ENCODE measurements at regions of chr20 and their contacts with region 1.

Region 1: DNA sequence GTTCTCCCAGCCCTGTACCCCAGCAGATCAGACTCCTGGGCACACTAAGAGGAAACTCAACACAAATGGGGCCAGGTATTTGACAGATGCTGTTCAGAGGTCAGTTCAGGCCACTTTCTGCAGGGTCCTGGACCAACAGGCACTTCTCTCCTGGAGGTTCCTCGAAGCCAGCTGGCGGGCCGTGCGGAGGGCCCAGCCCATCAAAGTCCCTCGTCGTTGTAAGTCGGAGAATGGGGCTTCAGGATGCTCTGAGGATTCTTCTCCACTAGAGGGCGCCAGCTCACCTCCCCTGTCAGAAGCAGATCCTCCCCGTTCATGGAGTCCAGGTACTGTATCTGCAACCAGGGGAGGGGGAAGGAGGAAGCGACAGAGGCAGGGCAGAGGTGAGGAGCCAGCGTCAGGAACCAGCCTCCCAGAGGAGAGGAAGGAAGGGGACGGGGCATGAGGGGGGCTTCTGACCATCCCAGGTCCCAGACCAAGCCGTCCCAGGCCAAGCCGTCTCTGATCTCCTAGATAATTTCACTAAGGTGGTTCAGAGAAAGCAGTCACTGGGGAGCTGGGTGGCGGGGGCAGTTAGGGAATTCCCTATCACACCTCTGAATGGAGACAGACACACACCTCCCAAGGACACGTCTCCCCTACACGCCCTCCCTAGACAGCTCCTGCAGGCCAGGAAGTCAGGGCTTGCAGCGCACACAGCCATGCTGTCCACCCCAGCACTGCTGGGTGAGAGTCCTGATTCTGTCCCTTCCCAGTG is 11.7 kb upstream of the FAM83C start:
- DNase-seq: peak; percentile 89
- H3K4me3 ChIP-seq: no peak overlapping the region
- H3K27ac ChIP-seq: peak overlapping the region; percentile 95
- H3K4me1 ChIP-seq: peaks cover 74% of the 10 kb centered on the region
- H3K27me3 ChIP-seq: no peaks in the 10 kb centered on the region
- CTCF ChIP-seq: peak; percentile 88 to 97

Region 2: DNA sequence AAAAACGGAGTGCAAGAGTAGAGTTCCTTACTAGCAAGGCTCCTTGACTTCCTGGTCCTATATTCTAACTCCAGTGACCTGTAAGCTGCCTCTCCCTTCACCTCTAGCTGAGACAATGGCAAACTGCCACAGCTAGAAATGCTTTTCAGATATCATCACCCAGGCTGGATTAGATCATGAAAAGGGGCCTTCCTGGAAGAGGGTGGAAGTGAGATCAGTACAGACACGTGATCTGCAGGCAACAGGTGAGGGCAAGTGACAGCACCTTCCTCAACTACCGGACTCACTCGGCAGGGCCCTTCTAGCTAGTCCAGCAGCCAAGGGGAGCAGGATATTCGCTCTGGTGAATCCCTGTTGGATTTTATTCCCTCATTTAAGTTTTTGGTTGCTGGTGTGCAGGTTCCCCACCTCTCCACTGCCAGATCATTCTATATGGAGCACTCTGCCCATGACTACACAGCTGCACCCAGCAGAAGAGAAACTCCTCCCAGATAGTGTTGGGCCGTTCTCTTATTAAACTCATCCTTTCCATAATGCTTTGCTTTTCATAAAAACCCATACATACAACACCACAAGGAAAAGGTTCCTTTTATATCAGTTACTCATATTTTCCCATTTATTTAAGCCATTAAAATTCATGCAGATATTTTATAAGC is 14.7 kb after region 1 on chr20:
- CTCF ChIA-PET with region 1: no interaction called
- dilution Hi-C with region 1: no loop called
- in situ Hi-C with region 1: no loop called
- intact Hi-C with region 1: loop called (anchors 1 kb)
- DNase-seq: peak; percentile 98
- H3K4me3 ChIP-seq: no peak overlapping the region
- H3K27ac ChIP-seq: peak overlapping the region; percentile 73
- H3K4me1 ChIP-seq: peaks cover 46% of the 10 kb centered on the region
- H3K27me3 ChIP-seq: no peaks in the 10 kb centered on the region
- CTCF ChIP-seq: no peak

Region 3: DNA sequence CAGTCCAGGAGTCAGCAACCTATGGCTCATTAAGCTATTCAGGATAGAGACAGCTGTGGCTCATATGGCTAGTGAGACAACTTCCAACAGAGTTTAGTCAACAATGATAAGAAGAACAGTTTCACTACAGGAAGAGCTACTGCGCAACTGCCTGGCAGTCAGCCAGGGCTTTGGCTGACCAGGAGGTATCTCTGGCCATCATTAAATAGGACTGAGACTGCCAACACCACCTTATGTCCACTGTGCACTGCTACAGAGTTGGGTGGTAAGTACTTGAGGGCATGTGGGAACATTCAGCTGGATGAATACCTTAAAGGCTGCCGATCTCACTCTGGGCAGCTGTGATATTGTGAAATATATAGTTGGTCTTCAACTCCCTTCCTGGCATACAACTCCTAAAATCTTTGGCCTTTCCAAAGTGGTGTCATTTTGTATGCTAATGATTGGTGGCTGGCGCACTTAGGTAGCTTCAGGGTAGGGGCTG is 40.5 kb after region 1 on chr20:
- CTCF ChIA-PET with region 1: interaction called, 4 read pairs
- dilution Hi-C with region 1: loop called (anchors 5 kb)
- in situ Hi-C with region 1: no loop called
- intact Hi-C with region 1: no loop called
- DNase-seq: peak; percentile 69
- H3K4me3 ChIP-seq: no peak overlapping the region
- H3K27ac ChIP-seq: no peak overlapping the region
- H3K4me1 ChIP-seq: peaks cover 35% of the 10 kb centered on the region
- H3K27me3 ChIP-seq: no peaks in the 10 kb centered on the region
- CTCF ChIP-seq: no peak

Region 4: GRCh38 chr20:35447082-35447789 is 143.3 kb after region 1 on chr20:
- CTCF ChIA-PET with region 1: interaction called, 7 read pairs
- dilution Hi-C with region 1: loop called (anchors 5 kb)
- in situ Hi-C with region 1: loop called (anchors 5 to 10 kb)
- intact Hi-C with region 1: loop called (anchors 1 kb)
- DNase-seq: peak; percentile 71
- H3K4me3 ChIP-seq: no peak overlapping the region
- H3K27ac ChIP-seq: no peak overlapping the region
- H3K4me1 ChIP-seq: peaks cover 26% of the 10 kb centered on the region
- H3K27me3 ChIP-seq: no peaks in the 10 kb centered on the region
- CTCF ChIP-seq: peak; percentile 89 to 97

Region 5: DNA sequence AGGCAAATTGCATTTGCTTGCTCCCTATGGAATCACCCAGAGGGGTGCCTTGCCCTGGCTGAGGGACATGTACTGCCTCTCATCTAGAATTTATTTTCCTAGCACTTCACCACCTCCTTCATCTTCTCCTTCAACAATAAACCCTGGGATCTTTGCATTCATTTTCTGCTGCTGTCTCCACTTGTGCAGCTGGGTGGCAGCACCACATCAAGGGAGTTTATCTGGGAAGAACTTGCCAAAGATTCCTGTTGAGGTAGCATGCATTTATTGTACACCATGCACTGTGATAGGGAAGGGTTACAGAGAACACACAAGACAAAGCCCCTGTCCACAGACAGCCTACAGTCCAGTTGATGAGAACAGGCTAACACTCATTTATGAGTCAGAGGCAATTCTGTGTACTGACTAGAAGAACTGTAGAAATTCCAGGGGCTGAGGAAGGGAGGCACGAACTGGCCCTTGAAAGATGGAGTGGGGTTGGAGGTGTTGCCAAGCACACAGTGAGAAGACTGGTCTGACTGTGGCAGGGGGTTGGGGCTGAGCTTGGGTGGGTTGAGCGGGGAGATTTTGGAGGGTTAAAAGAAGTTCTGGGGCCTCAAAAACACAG is 208.0 kb after region 1 on chr20:
- CTCF ChIA-PET with region 1: no interaction called
- dilution Hi-C with region 1: no loop called
- in situ Hi-C with region 1: no loop called
- intact Hi-C with region 1: loop called (anchors 10 kb)
- DNase-seq: peak; percentile 15
- H3K4me3 ChIP-seq: no peak overlapping the region
- H3K27ac ChIP-seq: no peak overlapping the region
- H3K4me1 ChIP-seq: peaks cover 18% of the 10 kb centered on the region
- H3K27me3 ChIP-seq: no peaks in the 10 kb centered on the region
- CTCF ChIP-seq: peak; percentile 49 to 69